A549 (cell line): ENCODE measurements at regions of chr1 and their contacts with region 1.

Region 1: DNA sequence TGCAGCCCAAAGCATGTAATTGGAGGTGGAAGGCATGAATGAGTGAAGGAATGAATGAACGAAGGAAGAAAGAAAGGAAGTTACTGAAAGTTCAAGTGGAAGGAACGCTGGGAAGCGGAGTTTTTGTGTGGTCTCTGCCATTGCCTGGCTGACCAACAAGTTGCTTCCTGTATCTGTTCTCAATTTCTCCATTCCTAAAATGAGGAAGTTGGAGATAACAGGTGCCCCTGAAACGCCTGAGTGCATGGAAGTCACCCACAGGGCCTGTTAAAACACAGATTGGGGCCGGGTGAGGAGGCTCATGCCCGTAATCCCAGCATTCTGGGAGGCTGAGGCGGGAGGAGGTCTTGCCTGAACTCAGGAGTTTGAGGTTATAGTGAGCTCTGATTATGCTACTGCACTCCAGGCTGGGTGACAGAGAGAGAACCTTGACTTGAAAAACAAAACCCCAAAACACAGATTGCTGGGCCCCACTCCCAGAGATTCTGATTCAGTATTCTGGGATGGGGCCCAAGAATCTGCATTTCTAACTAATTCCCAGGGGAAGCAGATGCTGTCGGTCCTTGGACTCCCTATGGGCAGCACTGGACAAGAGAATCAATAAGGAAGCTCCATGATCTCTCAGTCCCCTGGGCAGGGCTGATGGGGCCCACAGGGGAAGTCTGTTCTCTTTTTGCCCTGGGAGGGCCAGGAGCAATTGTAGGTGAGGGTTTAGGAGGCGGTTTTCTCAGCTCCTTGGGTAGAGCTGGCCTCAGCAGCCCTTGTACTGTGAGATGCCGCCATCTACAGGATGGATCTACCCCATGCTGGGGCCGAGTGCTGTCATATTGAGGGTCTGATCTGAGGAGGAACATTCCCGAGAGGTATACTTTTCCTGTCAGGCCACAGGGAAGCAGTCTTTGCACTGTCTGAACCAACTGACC is 3.3 kb upstream of the CNR2 start:
- DNase-seq: peak; percentile 57 to 81
- ATAC-seq: peak; percentile 96 to 97
- H3K4me3 ChIP-seq: no peak overlapping the region
- H3K27ac ChIP-seq: peak overlapping the region in 1 of 2 experiments; percentile 63; a peak in 2 of 6 replicates
- H3K4me1 ChIP-seq: peaks cover 16% of the 10 kb centered on the region
- CTCF ChIP-seq: peak; percentile 61
- EP300 ChIP-seq: no peak
- POLR2A ChIP-seq: no peak
- RAD21 ChIP-seq: peak; percentile 72 to 85

Region 2: DNA sequence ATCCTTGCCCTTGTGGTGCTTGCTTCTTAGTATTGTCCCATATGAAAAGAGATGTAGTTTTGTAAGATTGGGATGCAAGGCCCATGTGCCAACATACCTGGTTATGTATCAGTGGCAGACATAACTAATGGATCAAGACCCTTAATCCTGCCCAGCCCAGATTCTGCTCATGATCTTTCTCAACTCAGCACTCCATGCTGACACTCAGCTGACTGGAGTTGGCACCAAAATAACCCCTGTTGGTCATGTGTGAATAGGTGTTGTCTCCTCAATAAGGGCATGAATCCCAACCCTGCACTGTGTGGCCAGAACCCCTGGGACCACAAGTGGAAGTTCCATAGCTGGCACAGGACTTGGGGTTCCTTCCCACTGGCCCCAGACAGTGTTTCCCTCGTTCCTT is 10.6 kb after region 1 on chr1:
- CTCF ChIA-PET with region 1: interaction called, 12 read pairs
- POLR2A ChIA-PET with region 1: no interaction called
- DNase-seq: no peak
- ATAC-seq: no peak
- H3K4me3 ChIP-seq: no peak overlapping the region
- H3K27ac ChIP-seq: no peak overlapping the region
- H3K4me1 ChIP-seq: 0 out of 3 replicates have a peak, but pooled peaks cover 8% of the 10 kb centered on the region
- CTCF ChIP-seq: no peak
- EP300 ChIP-seq: no peak
- POLR2A ChIP-seq: no peak
- RAD21 ChIP-seq: no peak